Motor neuron (in vitro differentiated cells): ENCODE measurements at regions of chr6 and their contacts with region 1.

Region 1: DNA sequence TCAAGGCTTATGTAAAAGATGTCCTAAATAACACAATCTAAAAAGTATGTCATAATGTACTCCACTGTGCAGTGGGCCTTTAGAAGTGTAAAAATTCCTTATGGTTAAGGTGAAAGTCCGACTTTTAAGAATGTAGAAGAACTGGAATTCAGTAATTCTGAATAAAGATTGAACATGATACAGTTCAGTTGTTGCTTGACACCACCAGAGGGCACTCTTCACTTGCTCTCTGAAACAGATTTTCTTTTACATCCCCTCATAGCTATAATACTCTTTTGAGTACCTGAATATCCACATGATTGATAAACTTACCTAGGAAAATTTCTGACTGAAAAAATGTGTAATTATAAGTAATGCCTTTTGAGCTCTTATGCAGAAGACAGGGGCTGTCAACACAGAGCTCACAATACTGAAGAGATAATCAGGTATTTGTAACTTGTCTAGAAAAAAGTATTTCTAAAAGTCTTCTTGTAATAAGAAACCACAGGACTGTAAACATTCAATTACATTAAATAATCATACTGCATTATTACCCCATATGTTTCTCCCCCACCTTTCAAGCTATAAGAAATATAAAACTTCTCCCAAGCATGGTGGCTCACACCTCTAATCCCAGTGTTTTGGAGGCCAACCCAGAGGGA is 92.1 kb downstream of the POPDC3 start:
- ATAC-seq: peak in 6 of 8 experiments; percentile 43 to 77 (median 57)
- H3K4me3 ChIP-seq: no peak overlapping the region
- H3K27ac ChIP-seq: no peak overlapping the region
- H3K4me1 ChIP-seq: peaks cover 0 to 5% of the 10 kb centered on the region in 2 donors

Region 2: DNA sequence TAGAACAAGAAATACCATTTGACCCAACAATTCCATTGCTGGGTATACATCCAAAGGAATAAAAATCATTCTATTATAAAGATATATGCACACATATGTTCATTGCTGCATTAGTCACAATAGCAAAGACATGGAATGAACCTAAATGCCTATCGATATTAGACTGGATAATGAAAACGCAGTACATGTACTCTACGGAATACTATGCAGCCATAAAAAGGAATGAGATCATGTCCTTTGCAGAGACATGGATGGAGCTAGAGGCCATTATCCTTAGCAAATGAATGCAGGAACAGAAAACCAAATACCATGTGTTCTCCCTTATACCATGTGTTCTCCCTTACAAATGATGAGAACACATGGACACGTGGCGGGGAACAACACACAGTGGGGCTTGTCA is 418.2 kb before region 1 on chr6:
- in situ Hi-C with region 1: no loop called
- ATAC-seq: no peak
- H3K4me3 ChIP-seq: no peak overlapping the region
- H3K27ac ChIP-seq: no peak overlapping the region
- H3K4me1 ChIP-seq: no peaks in the 10 kb centered on the region

Region 3: GRCh38 chr6:105363100-105363754 is 275.5 kb after region 1 on chr6:
- in situ Hi-C with region 1: loop called in 3 of 9 experiments (anchors 25 kb)
- ATAC-seq: peak in 1 of 8 experiments; percentile 60
- H3K4me3 ChIP-seq: no peak overlapping the region
- H3K27ac ChIP-seq: no peak overlapping the region
- H3K4me1 ChIP-seq: no peaks in the 10 kb centered on the region

Region 4: GRCh38 chr6:105397987-105398386 is 310.3 kb after region 1 on chr6:
- in situ Hi-C with region 1: loop called in 5 of 9 experiments (anchors 10 to 25 kb)
- ATAC-seq: peak in 1 of 8 experiments; percentile 2
- H3K4me3 ChIP-seq: no peak overlapping the region
- H3K27ac ChIP-seq: no peak overlapping the region
- H3K4me1 ChIP-seq: peaks cover 16 to 21% of the 10 kb centered on the region in 2 donors

Region 5: DNA sequence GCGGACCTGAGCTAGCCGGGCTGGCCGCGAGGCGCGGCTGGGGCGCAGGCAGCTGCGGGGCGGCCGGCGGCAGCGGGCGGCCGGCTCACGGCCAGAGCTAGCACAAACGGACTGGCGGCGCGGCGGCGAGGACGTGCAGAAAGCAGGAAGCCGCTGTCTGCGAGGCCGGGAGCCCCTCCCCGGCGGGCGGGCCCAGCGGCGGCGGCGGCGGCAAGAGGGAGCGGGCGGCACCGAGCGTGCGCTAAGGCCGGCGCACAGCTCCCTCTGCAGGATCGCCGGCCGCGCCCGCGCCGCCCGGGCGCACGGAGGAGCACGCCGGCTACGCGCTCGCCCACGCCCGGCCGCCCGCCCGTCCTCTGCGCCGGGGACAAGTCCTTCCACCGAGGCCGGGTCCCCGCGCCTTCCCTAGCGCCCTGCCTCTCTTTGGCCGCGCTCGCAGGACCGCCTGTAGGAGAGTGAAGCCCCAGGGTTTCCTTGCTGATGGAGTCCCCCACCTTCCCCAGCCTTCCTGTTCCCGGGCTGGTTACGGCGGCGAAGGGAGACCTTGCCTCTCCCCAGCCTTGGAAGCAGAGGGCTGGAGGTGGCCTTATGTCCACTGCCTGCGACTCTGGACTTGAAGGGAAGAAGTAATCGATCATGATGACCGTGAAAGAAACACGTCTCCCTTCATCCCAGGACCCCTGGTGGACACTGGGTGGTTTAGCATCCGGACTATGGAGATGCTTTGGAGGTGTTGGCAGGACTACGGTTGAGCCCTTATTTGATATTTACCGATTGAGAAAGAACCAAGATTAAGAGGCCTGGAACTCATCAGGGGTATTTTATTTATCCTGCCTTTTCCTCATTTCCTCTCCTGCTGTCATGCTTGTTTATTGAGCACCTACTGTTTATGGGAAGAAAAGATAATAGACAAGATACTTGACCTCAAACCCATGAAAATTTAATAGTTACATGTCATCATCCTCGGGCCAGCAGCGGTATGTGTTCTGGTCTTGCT is 315.5 kb after region 1 on chr6 and contains the start of gene PREP:
- in situ Hi-C with region 1: loop called in 5 of 9 experiments (anchors 10 to 25 kb)
- ATAC-seq: peak; percentile 89 to 95 (median 90)
- H3K4me3 ChIP-seq: peak within 1 kb of the TSS; percentile 65 to 98 (median 82)
- H3K27ac ChIP-seq: peak within 1 kb of the TSS; percentile 84 to 89
- H3K4me1 ChIP-seq: peaks cover 17 to 21% of the 10 kb centered on the region in 2 donors
- total RNA-seq, gene PREP: 16.0 to 60.1 (median 25.4) TPM